Activated CD4-positive, alpha-beta T cell treated with anti-CD3 and anti-CD28 coated beads for 36 hours (primary cell): ENCODE measurements at regions of chr2 and their contacts with region 1.

Region 1: DNA sequence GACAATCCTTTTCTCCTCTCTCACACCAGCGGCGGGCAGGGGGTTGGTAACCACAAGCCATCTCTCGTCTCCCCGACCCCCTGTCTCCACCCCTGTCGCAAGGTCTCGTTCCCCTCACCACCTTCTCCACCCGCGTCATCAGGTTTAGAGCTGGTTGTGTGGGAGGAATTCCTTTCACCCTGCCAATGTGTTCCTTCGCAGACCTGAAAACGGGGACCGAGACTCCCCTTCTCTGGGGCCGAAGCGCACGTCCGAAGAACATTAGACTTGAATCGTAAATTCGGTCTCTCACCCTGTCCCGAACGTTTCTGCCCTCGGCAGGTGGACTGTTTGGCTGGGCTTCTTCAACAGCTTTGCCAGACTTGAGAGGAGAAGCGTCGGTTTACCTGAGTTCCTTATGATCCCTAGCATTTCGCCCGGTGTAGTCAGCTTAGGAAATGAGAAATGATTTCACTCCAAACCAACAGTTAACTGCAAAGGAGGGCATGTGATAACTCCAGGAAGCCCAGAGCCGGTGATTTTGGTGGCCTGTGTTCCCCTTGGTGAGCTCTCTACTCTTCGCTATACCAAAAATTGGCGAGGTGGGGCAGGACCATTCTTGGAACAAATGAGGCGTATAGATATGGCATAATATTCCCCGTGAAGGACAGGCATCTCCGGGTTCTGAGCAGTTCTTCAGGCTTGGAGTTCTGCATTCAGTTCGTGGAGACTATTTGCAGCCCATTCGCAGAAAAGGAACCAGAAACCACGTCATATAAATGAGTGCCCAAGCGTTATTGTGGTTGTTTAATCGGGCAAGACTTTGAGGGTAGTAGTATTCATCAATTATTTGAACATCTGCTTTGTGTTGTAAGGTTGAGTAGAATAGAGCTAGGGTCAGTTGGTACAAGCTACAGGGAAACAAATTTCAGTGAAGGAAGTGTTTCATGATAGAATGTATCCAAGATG is 694 bp downstream of the CFAP36 start:
- DNase-seq: peak; percentile 52
- ATAC-seq: peak; percentile 25
- H3K4me3 Mint-ChIP-seq: peak overlapping the region; percentile 99
- H3K27ac Mint-ChIP-seq: peak overlapping the region; percentile 90
- H3K4me1 Mint-ChIP-seq: peaks cover 8% of the 10 kb centered on the region
- H3K27me3 Mint-ChIP-seq: no peaks in the 10 kb centered on the region

Region 2: GRCh38 chr2:54740333-54740732 is 779.9 kb before region 1 on chr2:
- CTCF ChIA-PET with region 1: no interaction called
- POLR2A ChIA-PET with region 1: no interaction called
- intact Hi-C with region 1: no loop called
- DNase-seq: no peak
- ATAC-seq: no peak
- H3K4me3 Mint-ChIP-seq: no peak overlapping the region
- H3K27ac Mint-ChIP-seq: no peak overlapping the region
- H3K4me1 Mint-ChIP-seq: no peaks in the 10 kb centered on the region
- H3K27me3 Mint-ChIP-seq: peaks cover 5% of the 10 kb centered on the region

Region 3: GRCh38 chr2:55268907-55269644 is 251.1 kb before region 1 on chr2 and contains the start of gene MTIF2:
- CTCF ChIA-PET with region 1: no interaction called
- POLR2A ChIA-PET with region 1: no interaction called
- intact Hi-C with region 1: loop called (anchors 1 kb)
- DNase-seq: peak; percentile 94
- ATAC-seq: peak; percentile 95
- H3K4me3 Mint-ChIP-seq: peak within 1 kb of the TSS; percentile 96
- H3K27ac Mint-ChIP-seq: peak within 1 kb of the TSS; percentile 95
- H3K4me1 Mint-ChIP-seq: peaks cover 10% of the 10 kb centered on the region
- H3K27me3 Mint-ChIP-seq: no peaks in the 10 kb centered on the region
- total RNA-seq, gene MTIF2: 37.3 to 43.2 TPM

Region 4: DNA sequence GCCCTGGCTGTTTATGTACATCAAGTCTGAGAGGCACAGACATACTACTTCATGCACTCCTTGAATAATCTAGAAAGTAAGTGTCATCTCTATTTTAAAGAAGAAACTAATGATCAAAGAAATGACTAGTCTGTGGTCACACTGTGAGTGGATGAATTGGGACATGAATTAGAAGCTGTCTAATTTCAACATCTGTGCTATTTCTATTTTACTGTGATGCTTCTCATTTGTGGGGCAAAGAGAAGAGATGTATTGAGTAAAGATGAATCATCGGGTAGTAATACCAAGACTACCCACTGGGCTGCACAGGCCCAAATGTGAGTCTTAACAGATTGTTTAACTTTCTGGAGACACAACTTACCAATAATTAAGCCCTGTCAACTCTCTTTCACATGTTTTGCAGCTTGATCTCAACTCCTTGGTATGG is 208.8 kb before region 1 on chr2:
- CTCF ChIA-PET with region 1: no interaction called
- POLR2A ChIA-PET with region 1: no interaction called
- intact Hi-C with region 1: loop called in 1 of 2 experiments (anchors 1 kb)
- DNase-seq: peak; percentile 61
- ATAC-seq: peak; percentile 97
- H3K4me3 Mint-ChIP-seq: no peak overlapping the region
- H3K27ac Mint-ChIP-seq: no peak overlapping the region
- H3K4me1 Mint-ChIP-seq: peaks cover 23% of the 10 kb centered on the region
- H3K27me3 Mint-ChIP-seq: no peaks in the 10 kb centered on the region

Region 5: DNA sequence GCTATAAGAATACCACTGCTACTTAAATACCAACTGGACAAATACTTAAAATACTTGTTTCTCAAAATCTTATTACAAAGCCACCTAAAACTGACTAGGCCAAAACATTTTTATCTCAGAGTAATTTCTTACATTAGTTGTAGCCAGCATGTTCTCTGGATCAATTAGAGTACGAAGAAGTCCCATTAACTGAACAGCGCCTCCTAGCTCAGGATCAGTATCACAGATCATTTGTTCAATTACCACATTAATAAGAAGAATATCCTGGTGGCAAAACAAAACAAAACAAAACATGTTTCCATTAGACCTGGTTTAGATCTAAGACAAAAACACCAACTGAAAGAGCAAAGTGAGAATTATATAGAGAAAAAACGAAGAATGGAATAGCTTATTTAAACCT is 61.2 kb after region 1 on chr2:
- CTCF ChIA-PET with region 1: interaction called, 3 read pairs
- POLR2A ChIA-PET with region 1: no interaction called
- intact Hi-C with region 1: loop called in 1 of 2 experiments (anchors 2 kb)
- DNase-seq: no peak
- ATAC-seq: no peak
- H3K4me3 Mint-ChIP-seq: no peak overlapping the region
- H3K27ac Mint-ChIP-seq: no peak overlapping the region
- H3K4me1 Mint-ChIP-seq: peaks cover 24% of the 10 kb centered on the region
- H3K27me3 Mint-ChIP-seq: no peaks in the 10 kb centered on the region

Region 6: GRCh38 chr2:55693181-55694134 is 173.2 kb after region 1 on chr2 and contains the start of gene PNPT1:
- CTCF ChIA-PET with region 1: no interaction called
- POLR2A ChIA-PET with region 1: no interaction called
- intact Hi-C with region 1: loop called in 1 of 2 experiments (anchors 1 kb)
- DNase-seq: peak; percentile 97
- ATAC-seq: peak; percentile 100
- H3K4me3 Mint-ChIP-seq: peak within 1 kb of the TSS; percentile 98
- H3K27ac Mint-ChIP-seq: peak within 1 kb of the TSS; percentile 96
- H3K4me1 Mint-ChIP-seq: peaks cover 32% of the 10 kb centered on the region
- H3K27me3 Mint-ChIP-seq: no peaks in the 10 kb centered on the region
- total RNA-seq, gene PNPT1: 41.1 to 54.0 TPM